AG04450 (cell line): ENCODE measurements at regions of chr11 and their contacts with region 1.

Region 1: DNA sequence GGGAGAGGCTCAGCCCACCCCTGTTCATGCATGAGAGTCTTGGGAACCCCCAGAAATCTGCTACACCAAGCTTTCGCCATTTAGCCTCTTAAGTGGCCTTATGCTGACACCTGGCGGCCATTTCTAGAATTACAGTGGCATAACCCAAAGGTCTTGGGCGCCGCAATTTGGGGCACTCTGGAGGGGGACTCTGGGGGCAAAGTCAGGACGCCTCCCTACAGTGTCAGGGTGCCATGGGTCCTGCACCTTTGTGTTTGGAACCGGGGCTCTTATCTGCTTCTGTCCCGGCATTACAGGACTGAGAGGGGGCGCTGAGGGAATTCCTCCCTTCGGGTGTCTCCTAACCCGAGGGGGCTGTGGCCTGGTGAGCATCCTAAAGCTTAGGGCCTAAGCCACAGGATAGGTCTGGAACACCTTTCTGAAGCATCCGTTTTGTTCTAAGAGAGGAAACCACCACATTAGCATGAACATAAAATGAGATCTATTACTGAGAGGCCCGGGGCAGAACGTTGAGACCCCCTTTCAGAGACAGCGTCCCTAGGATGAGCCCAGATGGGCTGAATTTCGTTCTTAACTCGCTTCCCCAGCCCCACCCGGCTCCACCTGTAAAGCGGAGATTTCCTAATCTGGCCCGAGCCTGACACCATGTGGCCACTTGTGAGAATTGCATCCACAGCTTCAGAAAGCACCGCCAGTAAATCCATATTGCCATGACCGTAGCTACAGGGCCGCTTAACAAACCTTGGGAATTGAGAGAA is 9.3 kb downstream of the INS start:
- DNase-seq: peak; percentile 27
- H3K4me3 ChIP-seq: no peak overlapping the region
- H3K27ac ChIP-seq: no peak overlapping the region
- H3K27me3 ChIP-seq: peaks cover 49% of the 10 kb centered on the region
- CTCF ChIP-seq: peak; percentile 78

Region 2: DNA sequence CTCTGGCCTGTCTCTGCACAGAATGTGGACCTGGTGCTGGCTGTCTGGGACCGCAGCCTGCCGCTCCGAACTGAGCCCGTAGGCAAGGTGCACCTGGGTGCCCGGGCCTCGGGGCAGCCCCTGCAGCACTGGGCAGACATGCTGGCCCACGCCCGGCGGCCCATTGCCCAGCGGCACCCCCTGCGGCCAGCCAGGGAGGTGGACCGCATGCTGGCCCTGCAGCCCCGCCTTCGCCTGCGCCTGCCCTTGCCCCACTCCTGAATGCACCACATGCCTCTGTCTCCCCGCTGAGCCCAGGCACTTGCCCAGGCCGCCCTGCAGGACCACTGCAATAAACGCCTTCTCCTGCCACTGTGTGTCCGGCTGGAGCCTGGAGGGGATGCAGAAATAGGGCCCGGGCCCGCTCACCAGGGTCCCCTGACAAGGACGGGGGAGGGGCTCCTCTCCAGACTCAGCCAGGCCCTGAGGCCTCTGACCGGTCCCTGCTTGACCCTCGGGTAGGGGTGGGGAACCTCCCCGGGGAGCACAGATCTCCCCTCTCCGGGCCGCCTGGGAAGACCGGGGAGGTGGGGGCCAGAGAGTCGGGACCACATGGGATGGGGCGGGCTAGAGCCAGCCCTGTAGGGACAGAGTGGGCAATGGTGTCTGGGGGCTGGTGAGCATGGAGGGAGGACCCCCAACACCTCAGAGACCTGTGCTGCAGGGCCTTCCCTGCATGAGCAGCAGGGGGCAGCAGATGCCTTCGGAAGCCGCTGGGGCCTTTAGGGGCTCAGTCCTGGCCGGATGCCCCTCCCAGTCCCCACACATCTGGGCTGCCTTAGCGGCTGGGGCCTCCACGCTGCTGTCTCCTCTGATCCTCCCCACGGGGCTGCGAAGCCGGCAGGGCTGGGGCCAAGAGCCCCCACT is 314.3 kb before region 1 on chr11:
- CTCF ChIA-PET with region 1: interaction called, 41 read pairs
- POLR2A ChIA-PET with region 1: no interaction called
- DNase-seq: no peak
- H3K4me3 ChIP-seq: no peak overlapping the region
- H3K27ac ChIP-seq: no peak overlapping the region
- H3K27me3 ChIP-seq: peaks cover 8% of the 10 kb centered on the region
- CTCF ChIP-seq: peak; percentile 90

Region 3: DNA sequence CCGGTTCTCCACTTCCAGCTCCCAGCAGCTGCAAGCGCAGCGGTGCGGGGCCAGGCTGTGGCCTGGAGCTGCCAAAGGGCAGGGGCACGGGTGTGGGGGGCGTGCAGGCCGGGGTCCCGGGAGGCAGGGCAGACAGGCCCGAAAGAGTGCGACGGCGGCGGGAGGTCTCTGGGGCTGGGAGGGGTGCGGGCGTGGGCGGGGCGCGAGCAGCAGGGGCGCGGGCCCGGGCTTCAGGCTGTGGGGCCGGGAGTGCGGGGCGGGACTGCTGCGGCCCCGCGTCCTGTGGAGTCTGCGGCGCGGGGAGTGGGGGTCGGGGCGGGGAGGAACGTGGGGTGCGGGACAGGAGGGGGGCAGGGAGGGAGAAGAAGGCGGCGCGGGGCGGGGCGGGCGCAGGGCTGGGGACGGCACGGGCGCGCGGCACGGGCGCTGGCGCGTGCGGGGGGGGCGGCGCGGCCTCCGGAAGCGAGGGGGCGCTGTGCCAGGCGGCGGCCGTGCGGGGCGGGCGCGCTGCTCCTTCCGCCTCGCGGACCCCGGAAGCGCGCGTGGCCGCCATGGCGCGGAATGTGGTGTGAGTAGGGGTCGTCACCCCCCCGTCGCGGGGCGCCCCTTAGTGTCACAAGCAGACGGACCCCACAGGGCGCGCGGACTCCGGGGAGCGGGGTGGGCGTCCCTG is 204.7 kb before region 1 on chr11 and contains the start of gene MRPL23:
- CTCF ChIA-PET with region 1: interaction called, 39 read pairs
- POLR2A ChIA-PET with region 1: no interaction called
- DNase-seq: no peak
- H3K4me3 ChIP-seq: no peak within 1 kb of the TSS
- H3K27ac ChIP-seq: no peak within 1 kb of the TSS
- H3K27me3 ChIP-seq: no peaks in the 10 kb centered on the region
- CTCF ChIP-seq: no peak
- polyA plus RNA-seq, gene MRPL23: 63.3 and 78.3 TPM in 2 replicates

Region 4: DNA sequence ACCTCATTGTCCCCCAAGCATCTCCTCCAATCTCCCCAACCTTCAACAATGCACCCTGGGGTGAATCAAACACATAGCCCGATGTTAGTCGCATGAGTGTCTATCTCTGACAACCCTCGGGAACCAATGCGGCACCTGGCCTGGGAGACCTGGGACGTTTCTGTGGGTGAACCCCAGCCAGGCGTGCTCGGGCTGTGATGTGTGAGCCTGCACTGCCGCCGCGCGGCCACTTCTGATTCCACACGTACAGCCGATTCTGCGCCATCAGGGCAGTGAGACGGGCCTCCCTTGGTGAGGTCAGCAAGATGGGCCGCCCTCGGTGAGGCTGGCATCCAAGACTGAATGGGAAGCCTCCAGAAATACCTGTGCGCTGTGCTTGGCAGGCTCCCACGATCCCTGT is 148.9 kb before region 1 on chr11:
- CTCF ChIA-PET with region 1: interaction called, 11 read pairs
- POLR2A ChIA-PET with region 1: no interaction called
- DNase-seq: no peak
- H3K4me3 ChIP-seq: no peak overlapping the region
- H3K27ac ChIP-seq: no peak overlapping the region
- H3K27me3 ChIP-seq: no peaks in the 10 kb centered on the region
- CTCF ChIP-seq: no peak

Region 5: DNA sequence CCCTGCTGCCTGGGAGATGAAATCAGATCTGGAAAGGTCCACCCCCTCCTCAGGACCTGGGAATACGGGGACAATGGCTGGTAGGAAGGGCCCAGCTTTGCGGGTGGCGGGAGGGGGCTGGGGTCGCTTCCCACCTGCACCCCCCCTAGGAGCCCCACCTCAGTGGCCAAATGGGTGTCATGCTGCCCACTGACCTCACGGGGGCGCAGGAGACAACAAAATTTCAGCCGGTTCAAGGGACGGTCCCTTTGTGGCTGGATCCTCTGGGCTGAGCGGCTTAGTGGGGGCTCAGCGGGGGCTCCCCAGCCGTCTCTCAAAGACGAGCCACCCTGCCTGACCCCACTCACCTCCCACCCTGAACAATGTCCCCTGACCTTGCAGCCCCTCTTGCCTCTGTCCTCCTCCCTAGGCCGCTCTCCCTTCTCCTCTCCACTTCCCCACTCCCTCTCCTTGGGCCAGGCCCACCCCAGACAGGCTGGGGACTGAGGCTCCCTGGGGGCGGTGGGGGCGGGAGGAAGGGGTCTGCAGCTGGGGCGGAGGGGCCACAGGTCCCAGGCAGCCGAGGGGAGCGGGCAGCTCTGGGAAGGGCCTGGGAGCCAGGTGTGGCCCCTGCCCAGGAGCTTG is 114.7 kb before region 1 on chr11:
- CTCF ChIA-PET with region 1: interaction called, 557 read pairs
- POLR2A ChIA-PET with region 1: interaction called, 4 read pairs
- DNase-seq: no peak
- H3K4me3 ChIP-seq: no peak overlapping the region
- H3K27ac ChIP-seq: no peak overlapping the region
- H3K27me3 ChIP-seq: no peaks in the 10 kb centered on the region
- CTCF ChIP-seq: no peak

Region 6: GRCh38 chr11:2222451-2222850 is 70.8 kb after region 1 on chr11:
- CTCF ChIA-PET with region 1: no interaction called
- POLR2A ChIA-PET with region 1: no interaction called
- DNase-seq: no peak
- H3K4me3 ChIP-seq: no peak overlapping the region
- H3K27ac ChIP-seq: no peak overlapping the region
- H3K27me3 ChIP-seq: peaks cover 45% of the 10 kb centered on the region
- CTCF ChIP-seq: no peak